Mammary epithelial cell (primary cell): ENCODE measurements at regions of chr16 and their contacts with region 1.

Region 1: DNA sequence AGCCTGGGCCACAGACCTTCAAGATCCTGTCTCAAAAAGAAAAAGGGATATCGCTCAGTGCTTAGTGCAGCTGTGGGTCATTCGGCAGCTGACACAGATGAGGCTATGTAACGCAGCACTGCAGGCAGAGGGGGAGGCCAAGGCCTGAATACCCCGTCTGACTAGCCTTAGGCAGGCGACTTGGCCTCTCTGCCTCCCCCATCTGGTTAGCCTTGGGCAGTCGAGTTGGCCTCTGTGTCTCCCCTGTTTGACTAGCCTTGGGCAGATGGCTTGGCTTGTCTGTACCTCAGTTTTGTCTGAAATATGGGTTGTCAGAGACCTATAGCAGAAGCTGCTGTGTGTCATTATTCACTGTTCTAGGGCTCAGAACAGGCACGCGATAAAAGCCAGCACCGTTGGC is 10.0 kb downstream of the SPATA33 start:
- DNase-seq: no peak
- H3K4me3 ChIP-seq: no peak overlapping the region
- H3K27ac ChIP-seq: no peak overlapping the region
- H3K4me1 ChIP-seq: peaks cover 13% of the 10 kb centered on the region
- H3K27me3 ChIP-seq: no peaks in the 10 kb centered on the region
- CTCF ChIP-seq: no peak

Region 2: DNA sequence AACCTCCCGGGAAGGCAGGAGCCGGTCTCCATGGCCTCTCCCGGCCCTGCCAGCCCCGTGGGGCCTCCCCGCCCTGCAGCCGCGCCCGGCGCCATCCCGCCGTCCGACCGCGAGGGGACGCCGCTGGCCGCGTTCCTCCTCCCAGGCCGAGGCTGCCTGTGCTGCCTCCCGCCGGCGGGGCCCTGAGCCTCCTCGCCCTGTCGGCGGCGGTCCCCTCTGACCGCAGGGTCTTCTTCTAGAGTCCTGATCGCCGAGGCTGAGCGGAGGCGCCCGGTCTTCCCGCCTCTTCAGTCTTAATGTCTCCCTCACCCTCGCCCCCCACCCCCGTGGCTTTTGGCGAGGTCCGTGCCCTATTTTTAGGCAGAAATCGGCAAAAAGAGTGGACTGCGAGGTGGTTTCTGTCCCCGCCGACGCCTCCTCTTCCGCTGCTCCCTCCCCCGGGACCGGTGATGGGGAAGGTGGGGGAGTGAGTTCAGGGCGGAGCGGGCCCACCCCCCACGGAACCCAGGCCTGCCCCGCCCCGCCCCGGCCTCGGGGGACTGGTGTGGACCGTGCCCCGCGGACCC is 92.9 kb before region 1 on chr16:
- CTCF ChIA-PET with region 1: no interaction called
- dilution Hi-C with region 1: no loop called
- in situ Hi-C with region 1: no loop called
- intact Hi-C with region 1: loop called (anchors 1 kb)
- DNase-seq: peak; percentile 41
- H3K4me3 ChIP-seq: peak overlapping the region in 2 of 3 experiments; percentile 28 to 29
- H3K27ac ChIP-seq: no peak overlapping the region
- H3K4me1 ChIP-seq: peaks cover 15% of the 10 kb centered on the region
- H3K27me3 ChIP-seq: peaks cover 7% of the 10 kb centered on the region
- CTCF ChIP-seq: peak; percentile 64 to 67

Region 3: DNA sequence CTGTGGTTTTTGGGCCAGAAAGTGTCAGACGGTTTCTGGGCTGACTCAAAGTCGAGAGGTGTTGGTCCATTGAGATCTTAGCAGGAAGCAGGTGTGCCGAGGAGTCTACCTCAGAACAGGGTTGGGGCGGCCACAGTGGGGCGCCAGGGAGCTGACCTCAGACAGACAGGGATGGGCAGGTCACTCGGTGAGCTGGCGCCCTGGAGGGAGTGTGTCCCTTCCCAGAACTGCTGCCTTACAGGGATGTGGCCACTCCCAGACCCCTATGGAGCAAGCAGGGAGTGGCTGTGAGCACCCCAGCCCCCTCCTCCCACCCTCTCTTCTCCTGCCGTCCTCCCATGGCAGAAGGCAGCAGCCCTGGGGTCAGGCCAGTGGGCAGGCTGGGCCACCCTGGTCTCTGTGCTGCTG is 68.2 kb before region 1 on chr16:
- CTCF ChIA-PET with region 1: no interaction called
- dilution Hi-C with region 1: no loop called
- in situ Hi-C with region 1: no loop called
- intact Hi-C with region 1: loop called (anchors 1 kb)
- DNase-seq: peak; percentile 41
- H3K4me3 ChIP-seq: no peak overlapping the region
- H3K27ac ChIP-seq: no peak overlapping the region
- H3K4me1 ChIP-seq: peaks cover 36% of the 10 kb centered on the region
- H3K27me3 ChIP-seq: no peaks in the 10 kb centered on the region
- CTCF ChIP-seq: peak; percentile 50 to 64

Region 4: GRCh38 chr16:89615596-89616090 is 52.0 kb before region 1 on chr16:
- CTCF ChIA-PET with region 1: interaction called, 3 read pairs
- dilution Hi-C with region 1: no loop called
- in situ Hi-C with region 1: no loop called
- intact Hi-C with region 1: loop called (anchors 1 kb)
- DNase-seq: no peak
- H3K4me3 ChIP-seq: no peak overlapping the region
- H3K27ac ChIP-seq: no peak overlapping the region
- H3K4me1 ChIP-seq: no peaks in the 10 kb centered on the region
- H3K27me3 ChIP-seq: no peaks in the 10 kb centered on the region
- CTCF ChIP-seq: peak; percentile 44 to 79

Region 5: GRCh38 chr16:89657442-89658220 is 10.0 kb before region 1 on chr16 and contains the starts of genes CHMP1A and SPATA33:
- CTCF ChIA-PET with region 1: interaction called, 10 read pairs
- dilution Hi-C with region 1: no loop called
- in situ Hi-C with region 1: no loop called
- intact Hi-C with region 1: no loop called
- DNase-seq: peak; percentile 86
- H3K4me3 ChIP-seq: peak within 1 kb of the TSS; percentile 71 to 98 (median 78)
- H3K27ac ChIP-seq: peak within 1 kb of the TSS; percentile 75
- H3K4me1 ChIP-seq: peaks cover 10% of the 10 kb centered on the region
- H3K27me3 ChIP-seq: no peaks in the 10 kb centered on the region
- CTCF ChIP-seq: no peak
- total RNA-seq, gene CHMP1A: 99.1 to 104 TPM
- total RNA-seq, gene SPATA33: 2.2 to 11.2 TPM

Region 6: GRCh38 chr16:89805136-89805905 is 137.7 kb after region 1 on chr16:
- CTCF ChIA-PET with region 1: no interaction called
- dilution Hi-C with region 1: no loop called
- in situ Hi-C with region 1: no loop called
- intact Hi-C with region 1: no loop called
- DNase-seq: no peak
- H3K4me3 ChIP-seq: no peak overlapping the region
- H3K27ac ChIP-seq: no peak overlapping the region
- H3K4me1 ChIP-seq: no peaks in the 10 kb centered on the region
- H3K27me3 ChIP-seq: no peaks in the 10 kb centered on the region
- CTCF ChIP-seq: no peak